ENCODE measurements at regions of chr3 and their contacts with region 1.

Region 1: DNA sequence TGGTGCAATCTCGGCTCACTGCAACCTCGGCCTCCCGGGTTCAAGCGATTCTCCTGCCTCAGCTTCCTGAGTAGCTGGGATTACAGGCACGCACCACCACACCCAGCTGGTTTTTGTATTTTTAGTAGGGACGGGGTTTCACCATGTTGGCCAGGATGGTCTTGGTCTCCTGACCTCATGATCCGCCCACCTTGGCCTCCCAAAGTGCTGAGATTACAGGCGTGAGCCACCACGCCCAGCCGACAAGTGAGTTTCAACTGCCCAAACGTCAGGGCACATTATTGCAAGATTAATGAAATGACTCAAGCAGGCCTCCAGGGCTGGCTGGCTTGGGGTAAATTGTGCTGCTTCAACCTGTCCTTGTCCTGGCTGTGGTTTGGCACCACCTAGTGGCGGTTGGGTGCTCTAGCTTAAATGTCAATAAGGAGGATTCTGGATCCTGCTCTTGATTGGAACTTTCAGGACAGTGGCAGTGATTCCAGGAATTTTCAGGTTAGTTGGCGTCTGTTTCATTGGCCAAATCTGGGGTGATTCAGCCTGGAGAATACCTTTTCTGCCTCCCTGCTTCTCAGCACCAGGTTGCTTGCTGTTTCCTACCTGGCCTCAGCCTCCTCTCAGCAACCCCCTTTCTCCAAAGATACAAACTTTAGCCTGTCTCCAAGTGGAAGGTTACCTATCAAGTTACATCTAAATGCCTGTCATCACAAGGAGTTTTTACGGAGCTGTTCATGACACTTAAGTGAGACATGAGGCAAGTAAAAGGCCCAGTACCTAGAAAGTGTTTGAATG is 32.4 kb upstream of the SACM1L start:
- DNase-seq: peak; percentile 76
- ATAC-seq: peak; percentile 88
- H3K4me3 ChIP-seq: no peak overlapping the region
- H3K27ac ChIP-seq: peak overlapping the region; percentile 57
- H3K4me1 ChIP-seq: peaks cover 33% of the 10 kb centered on the region
- H3K27me3 ChIP-seq: no peaks in the 10 kb centered on the region
- CTCF ChIP-seq: peak; percentile 83 to 93 (median 92)
- EP300 ChIP-seq: no peak
- POLR2A ChIP-seq: no peak
- RAD21 ChIP-seq: peak; percentile 93

Region 2: GRCh38 chr3:45037734-45038455 is 618.9 kb before region 1 on chr3:
- CTCF ChIA-PET with region 1: interaction called, 51 read pairs
- POLR2A ChIA-PET with region 1: no interaction called
- RAD21 ChIA-PET with region 1: interaction called, 16 read pairs
- SMC1A ChIA-PET with region 1: interaction called, 15 read pairs
- in situ Hi-C with region 1: loop called (anchors 5 kb)
- intact Hi-C with region 1: loop called (anchors 5 kb)
- DNase-seq: peak; percentile 95
- ATAC-seq: peak; percentile 75
- H3K4me3 ChIP-seq: no peak overlapping the region
- H3K27ac ChIP-seq: no peak overlapping the region
- H3K4me1 ChIP-seq: peaks cover 21% of the 10 kb centered on the region
- H3K27me3 ChIP-seq: no peaks in the 10 kb centered on the region; a peak in 2 of 4 replicates
- CTCF ChIP-seq: peak; percentile 91 to 96 (median 94)
- EP300 ChIP-seq: no peak
- POLR2A ChIP-seq: no peak
- RAD21 ChIP-seq: peak; percentile 86

Region 3: DNA sequence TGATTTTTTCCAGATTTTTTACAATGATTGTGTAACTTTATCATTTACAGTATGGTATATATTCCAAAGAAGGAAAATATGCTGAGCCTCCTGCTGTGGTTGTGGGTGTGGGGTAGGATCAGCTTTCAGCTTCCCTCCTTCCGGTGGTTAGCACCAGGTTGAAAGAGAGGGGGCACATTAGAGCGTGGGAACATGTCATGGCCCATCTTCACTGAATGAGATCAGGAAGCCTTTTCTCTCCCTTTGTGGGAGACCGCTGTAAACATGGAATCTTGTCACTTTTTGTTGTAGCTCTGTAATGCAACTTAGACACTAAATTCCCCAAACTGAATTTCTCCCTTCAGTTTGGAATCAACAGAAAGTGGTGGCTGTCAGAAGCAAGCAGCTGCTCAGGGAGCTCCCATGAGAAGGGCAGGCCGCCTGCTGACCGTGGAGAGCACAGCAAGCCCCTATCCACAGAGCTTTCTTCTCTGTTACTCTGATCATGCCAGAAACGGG is 148.9 kb before region 1 on chr3:
- CTCF ChIA-PET with region 1: interaction called, 259 read pairs
- POLR2A ChIA-PET with region 1: interaction called, 7 read pairs
- RAD21 ChIA-PET with region 1: interaction called, 63 read pairs
- SMC1A ChIA-PET with region 1: interaction called, 55 read pairs
- in situ Hi-C with region 1: loop called (anchors 5 kb)
- intact Hi-C with region 1: loop called (anchors 1 kb)
- DNase-seq: no peak
- ATAC-seq: no peak
- H3K4me3 ChIP-seq: no peak overlapping the region
- H3K27ac ChIP-seq: no peak overlapping the region
- H3K4me1 ChIP-seq: no peaks in the 10 kb centered on the region
- H3K27me3 ChIP-seq: no peaks in the 10 kb centered on the region
- CTCF ChIP-seq: no peak
- EP300 ChIP-seq: no peak
- POLR2A ChIP-seq: no peak
- RAD21 ChIP-seq: no peak

Region 4: GRCh38 chr3:45546716-45547701 is 109.8 kb before region 1 on chr3:
- CTCF ChIA-PET with region 1: interaction called, 36 read pairs
- POLR2A ChIA-PET with region 1: interaction called, 6 read pairs
- RAD21 ChIA-PET with region 1: interaction called, 7 read pairs
- SMC1A ChIA-PET with region 1: interaction called, 8 read pairs
- in situ Hi-C with region 1: no loop called
- intact Hi-C with region 1: no loop called
- DNase-seq: no peak
- ATAC-seq: peak; percentile 39; the same call in 2 of the 3 replicates
- H3K4me3 ChIP-seq: no peak overlapping the region
- H3K27ac ChIP-seq: no peak overlapping the region
- H3K4me1 ChIP-seq: peaks cover 6% of the 10 kb centered on the region; the same call in 1 of the 2 replicates
- H3K27me3 ChIP-seq: no peaks in the 10 kb centered on the region
- CTCF ChIP-seq: peak in 2 of 3 experiments; percentile 45 to 48; a peak in 3 of 6 replicates
- EP300 ChIP-seq: no peak
- POLR2A ChIP-seq: no peak
- RAD21 ChIP-seq: 0 out of 2 replicates have a peak, but pooled peaks have one; percentile 17

Region 5: DNA sequence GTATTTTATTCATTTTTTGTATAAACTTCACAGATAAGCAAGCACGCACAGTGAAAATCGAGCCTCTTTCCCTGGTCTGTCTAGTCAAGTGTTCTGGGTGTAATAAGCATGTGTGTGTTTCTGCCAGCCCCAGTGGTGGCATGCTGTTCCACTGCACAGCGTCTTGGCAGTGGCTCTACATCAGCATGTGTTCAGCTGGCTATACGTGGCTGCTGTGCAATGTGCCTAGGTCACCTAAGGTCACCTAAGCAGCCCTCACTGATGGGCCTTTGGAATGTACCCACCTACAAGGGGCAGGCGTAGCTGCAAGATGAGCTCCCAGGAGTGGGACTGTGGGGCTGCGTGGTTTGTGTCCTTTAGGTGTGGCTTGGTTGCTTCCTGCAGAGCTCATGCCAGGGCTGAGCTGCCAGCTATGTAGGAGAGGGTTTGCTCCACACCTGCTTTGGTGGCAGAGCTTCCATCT is 57.3 kb before region 1 on chr3:
- CTCF ChIA-PET with region 1: interaction called, 78 read pairs
- POLR2A ChIA-PET with region 1: interaction called, 12 read pairs
- RAD21 ChIA-PET with region 1: interaction called, 40 read pairs
- SMC1A ChIA-PET with region 1: interaction called, 45 read pairs
- in situ Hi-C with region 1: loop called (anchors 5 kb)
- intact Hi-C with region 1: no loop called
- DNase-seq: no peak
- ATAC-seq: no peak
- H3K4me3 ChIP-seq: peak overlapping the region; percentile 68
- H3K27ac ChIP-seq: no peak overlapping the region
- H3K4me1 ChIP-seq: peaks cover 19% of the 10 kb centered on the region
- H3K27me3 ChIP-seq: no peaks in the 10 kb centered on the region
- CTCF ChIP-seq: no peak
- EP300 ChIP-seq: no peak
- POLR2A ChIP-seq: peak; percentile 52; the same call in 1 of the 2 replicates
- RAD21 ChIP-seq: no peak

Region 6: DNA sequence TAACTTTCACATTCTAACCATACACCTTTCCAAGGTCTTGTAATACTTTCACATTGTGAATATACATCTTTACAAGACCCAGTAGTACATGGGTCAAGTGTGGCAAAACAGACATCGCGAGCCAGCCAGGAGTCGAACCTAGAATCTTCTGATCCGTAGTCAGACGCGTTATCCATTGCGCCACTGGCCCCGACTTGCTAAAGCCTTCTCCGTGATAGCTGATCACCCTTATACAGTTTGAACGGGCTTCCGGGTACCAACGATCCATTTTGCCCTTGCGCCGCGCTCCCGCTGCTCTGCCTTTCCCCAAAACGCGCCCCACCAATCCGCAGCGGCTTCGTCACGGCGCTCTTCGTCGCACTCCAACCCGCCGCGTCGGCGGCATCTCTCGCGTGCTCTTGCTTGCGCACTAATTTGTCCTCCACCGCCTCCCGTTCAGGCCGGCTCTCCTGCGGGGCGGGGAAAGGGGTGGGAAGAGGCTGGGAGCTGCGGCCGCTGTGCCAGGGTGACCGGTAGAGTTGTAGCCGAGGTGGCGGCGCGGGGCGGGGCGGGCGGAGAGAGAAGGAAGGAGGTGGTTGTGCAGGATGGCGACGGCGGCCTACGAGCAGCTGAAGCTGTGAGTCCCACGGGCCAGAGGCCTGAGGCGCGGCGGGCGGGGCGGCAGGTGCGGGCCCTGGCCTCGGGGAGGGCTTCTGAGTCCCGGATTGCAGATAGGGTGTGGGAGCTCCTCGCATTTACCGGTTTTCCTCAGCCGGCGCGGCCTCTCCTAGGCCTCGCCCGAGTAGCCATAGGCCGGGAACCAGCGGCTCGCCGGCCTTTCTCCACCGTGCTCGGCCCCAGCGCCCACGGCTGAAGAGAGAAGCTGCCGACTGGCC is 32.4 kb after region 1 on chr3 and contains the start of gene SACM1L:
- CTCF ChIA-PET with region 1: interaction called, 30 read pairs
- POLR2A ChIA-PET with region 1: interaction called, 9 read pairs
- RAD21 ChIA-PET with region 1: interaction called, 13 read pairs
- SMC1A ChIA-PET with region 1: interaction called, 10 read pairs
- in situ Hi-C with region 1: no loop called
- intact Hi-C with region 1: no loop called
- DNase-seq: peak; percentile 99
- ATAC-seq: peak; percentile 86
- H3K4me3 ChIP-seq: peak within 1 kb of the TSS; percentile 88
- H3K27ac ChIP-seq: peak within 1 kb of the TSS; percentile 84
- H3K4me1 ChIP-seq: peaks cover 22% of the 10 kb centered on the region
- H3K27me3 ChIP-seq: no peaks in the 10 kb centered on the region
- CTCF ChIP-seq: no peak
- EP300 ChIP-seq: peak in 1 of 2 experiments; percentile 82; a peak in 1 of 4 replicates
- POLR2A ChIP-seq: peak; percentile 86
- RAD21 ChIP-seq: no peak
- polyA plus RNA-seq, gene SACM1L: 16.5 to 20.7 TPM